ENCODE measurements at regions of chr3 and their contacts with region 1.

Region 1: GRCh38 chr3:142993958-142994442 is 7.4 kb upstream of the U2SURP start:
- DNase-seq: no peak
- H3K4me3 ChIP-seq: no peak overlapping the region
- CTCF ChIP-seq: peak; percentile 55

Region 2: DNA sequence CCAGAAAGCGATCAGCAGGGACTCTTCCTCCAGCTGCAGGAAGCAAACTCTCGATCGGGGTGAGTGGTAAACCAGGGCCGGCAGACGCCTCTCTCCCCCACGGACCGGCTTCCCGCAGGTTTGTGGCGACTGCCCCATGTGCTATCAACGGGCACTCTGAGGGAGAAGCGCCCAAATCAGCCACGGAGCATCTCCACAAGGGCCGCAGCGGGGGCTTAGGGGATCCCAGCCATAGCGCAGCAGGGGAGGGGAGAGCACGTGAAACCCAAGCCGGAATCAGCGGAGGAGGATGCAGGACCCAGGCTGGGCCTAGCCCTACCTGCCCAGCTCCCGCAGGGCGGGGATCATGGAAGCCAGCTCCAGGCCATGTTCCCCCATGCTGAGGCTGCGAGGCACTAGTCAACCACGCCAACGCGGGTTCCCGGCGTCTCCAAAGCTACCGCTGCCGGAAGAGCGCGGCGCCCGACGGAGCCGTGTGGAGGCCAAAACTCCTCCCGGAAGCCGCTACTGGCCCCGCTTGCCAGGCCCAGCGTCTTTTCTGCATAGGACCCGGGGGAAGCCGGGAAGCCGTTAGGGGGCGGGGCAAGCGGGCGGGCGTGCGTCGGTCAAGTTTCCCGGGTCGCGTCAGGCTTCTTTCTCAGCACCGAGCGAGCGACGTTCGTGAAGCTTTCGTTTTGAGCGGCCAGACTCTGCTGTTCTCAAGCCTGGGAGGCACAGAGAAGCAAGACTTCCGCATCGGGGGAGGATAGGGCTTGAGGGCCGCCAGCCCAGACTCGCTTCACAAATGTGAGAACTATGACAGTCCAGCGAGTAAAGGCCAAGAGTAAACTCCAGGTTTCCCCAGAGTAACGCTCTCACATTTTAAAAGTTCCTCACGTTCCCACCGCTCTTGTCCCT is 415.4 kb before region 1 on chr3 and contains the start of gene ATR:
- CTCF ChIA-PET with region 1: interaction called, 10 read pairs
- POLR2A ChIA-PET with region 1: no interaction called
- DNase-seq: peak; percentile 80
- H3K4me3 ChIP-seq: peak within 1 kb of the TSS; percentile 99
- CTCF ChIP-seq: no peak

Region 3: DNA sequence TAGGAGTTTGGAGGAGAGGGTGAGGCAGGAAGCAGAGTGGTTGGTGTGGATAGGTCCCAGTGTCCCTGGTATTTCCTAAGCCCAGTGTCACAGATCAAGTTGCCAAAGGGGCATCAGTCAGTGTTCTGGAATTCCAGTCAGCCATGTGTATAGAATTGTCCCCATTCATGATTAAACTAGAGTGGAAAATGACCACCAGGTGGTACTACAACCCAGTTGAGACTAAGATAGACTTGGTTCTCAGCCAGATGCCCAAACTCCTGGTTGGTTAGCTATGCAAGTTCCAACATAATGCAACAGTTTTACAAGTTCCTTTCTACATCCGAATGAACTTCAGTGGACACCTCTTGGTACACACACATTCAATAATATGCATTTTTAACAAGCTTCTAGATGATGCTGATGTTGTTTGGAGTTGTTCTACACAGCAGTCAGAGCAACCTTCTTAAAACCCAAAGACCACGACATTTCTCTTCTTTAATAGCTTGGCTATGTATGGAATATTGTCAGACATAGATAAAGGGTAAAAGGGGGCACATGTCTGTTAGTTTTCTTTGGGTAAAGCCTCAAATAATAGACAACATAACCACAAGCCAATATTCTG is 407.1 kb before region 1 on chr3:
- CTCF ChIA-PET with region 1: interaction called, 75 read pairs
- POLR2A ChIA-PET with region 1: no interaction called
- DNase-seq: no peak
- H3K4me3 ChIP-seq: no peak overlapping the region
- CTCF ChIP-seq: peak; percentile 50

Region 4: GRCh38 chr3:142968319-142969025 is 25.5 kb before region 1 on chr3:
- CTCF ChIA-PET with region 1: interaction called, 12 read pairs
- POLR2A ChIA-PET with region 1: no interaction called
- DNase-seq: no peak
- H3K4me3 ChIP-seq: no peak overlapping the region
- CTCF ChIP-seq: no peak

Region 5: GRCh38 chr3:142976621-142977398 is 17.2 kb before region 1 on chr3:
- CTCF ChIA-PET with region 1: interaction called, 12 read pairs
- POLR2A ChIA-PET with region 1: no interaction called
- DNase-seq: peak; percentile 75
- H3K4me3 ChIP-seq: no peak overlapping the region
- CTCF ChIP-seq: no peak